AG04449 (cell line): ENCODE measurements at regions of chr1 and their contacts with region 1.

Region 1: GRCh38 chr1:239951511-239952140 is 140.1 kb upstream of the FMN2 start:
- DNase-seq: peak; percentile 26
- H3K4me3 ChIP-seq: no peak overlapping the region
- CTCF ChIP-seq: peak; percentile 64

Region 2: DNA sequence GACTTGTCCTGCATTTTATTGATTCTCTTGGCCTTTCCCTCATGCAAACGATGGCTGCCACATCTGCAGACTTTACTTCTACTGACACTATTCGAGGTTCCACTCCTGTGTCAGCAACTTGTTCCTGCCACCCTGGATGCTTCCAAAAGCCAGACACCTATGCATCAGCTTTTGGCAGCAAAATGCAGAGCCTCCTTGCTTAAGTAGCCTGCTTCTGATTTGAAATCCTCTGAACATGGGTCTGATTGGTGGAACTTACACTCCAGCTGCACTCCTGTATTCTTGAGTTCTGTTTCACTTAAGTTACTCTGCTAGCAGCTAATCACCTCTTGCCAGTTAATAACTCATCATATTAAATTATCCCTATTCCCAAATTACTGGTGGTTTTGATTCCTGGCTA is 12.0 kb before region 1 on chr1:
- CTCF ChIA-PET with region 1: interaction called, 14 read pairs
- POLR2A ChIA-PET with region 1: no interaction called
- DNase-seq: no peak
- H3K4me3 ChIP-seq: no peak overlapping the region
- CTCF ChIP-seq: no peak

Region 3: GRCh38 chr1:239976130-239976968 is 24.7 kb after region 1 on chr1:
- CTCF ChIA-PET with region 1: interaction called, 110 read pairs
- POLR2A ChIA-PET with region 1: no interaction called
- DNase-seq: no peak
- H3K4me3 ChIP-seq: no peak overlapping the region
- CTCF ChIP-seq: peak; percentile 78

Region 4: DNA sequence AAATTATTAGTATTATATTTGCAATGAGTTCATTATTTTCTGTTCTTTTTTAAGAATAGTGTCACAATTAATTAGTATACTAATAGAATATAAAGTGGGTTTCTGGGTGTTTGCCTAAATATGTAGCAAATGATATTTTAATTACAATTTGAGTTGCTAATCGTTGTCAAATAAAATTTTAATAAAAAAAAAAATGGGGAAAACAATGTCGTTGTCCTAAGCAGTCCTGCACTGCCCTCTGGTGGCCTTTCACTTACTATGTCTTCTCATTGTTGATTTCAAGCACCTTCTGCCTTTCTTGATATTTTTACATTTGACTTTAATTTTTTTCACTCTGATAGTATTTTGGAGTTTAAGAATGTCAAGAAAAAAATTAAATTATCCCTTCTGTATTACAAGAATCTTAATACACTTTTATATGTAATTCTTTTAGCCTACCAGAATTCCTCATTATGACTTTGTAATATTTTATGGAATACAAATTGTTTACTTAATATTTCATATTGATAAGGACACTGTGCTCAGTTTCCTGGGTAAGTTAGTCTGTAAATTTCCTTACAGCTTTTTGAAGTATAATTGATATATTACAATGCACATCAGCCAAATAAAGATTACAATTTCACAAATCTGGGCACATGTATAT is 35.6 kb after region 1 on chr1:
- CTCF ChIA-PET with region 1: interaction called, 98 read pairs
- POLR2A ChIA-PET with region 1: no interaction called
- DNase-seq: no peak
- H3K4me3 ChIP-seq: no peak overlapping the region
- CTCF ChIP-seq: peak; percentile 58

Region 5: GRCh38 chr1:240004086-240004749 is 52.6 kb after region 1 on chr1:
- CTCF ChIA-PET with region 1: interaction called, 28 read pairs
- POLR2A ChIA-PET with region 1: no interaction called
- DNase-seq: no peak
- H3K4me3 ChIP-seq: no peak overlapping the region
- CTCF ChIP-seq: peak; percentile 78

Region 6: DNA sequence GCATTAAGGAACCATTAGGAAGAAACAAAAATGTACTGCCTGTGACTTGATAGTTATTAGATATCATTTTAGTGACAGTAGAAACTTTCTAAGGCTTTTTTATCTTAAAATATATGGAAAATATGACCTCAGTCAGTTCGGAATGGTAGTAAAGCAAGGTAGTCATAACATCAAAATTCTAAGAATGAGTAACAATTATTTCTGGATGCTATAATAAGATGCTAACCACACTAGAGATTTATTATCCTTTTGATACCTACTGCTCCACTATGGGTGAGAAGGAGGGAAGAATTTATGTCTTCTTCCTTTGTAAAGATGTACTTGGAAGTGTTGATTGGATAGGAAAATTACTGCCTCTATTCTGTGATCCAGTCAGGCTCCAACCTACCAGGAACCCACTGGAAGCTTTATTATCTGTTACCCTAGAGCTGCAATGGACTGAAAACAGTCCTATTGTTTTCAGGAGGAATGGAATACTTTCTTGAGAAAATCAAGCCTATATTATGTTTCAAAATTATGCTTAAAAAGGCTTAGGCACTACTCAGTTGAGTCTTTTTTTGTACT is 148.8 kb after region 1 on chr1:
- CTCF ChIA-PET with region 1: no interaction called
- POLR2A ChIA-PET with region 1: no interaction called
- DNase-seq: peak; percentile 42
- H3K4me3 ChIP-seq: no peak overlapping the region
- CTCF ChIP-seq: no peak